Posterior cingulate gyrus (tissue), 11 donors: ENCODE measurements at regions of chr2 and their contacts with region 1.

Region 1: DNA sequence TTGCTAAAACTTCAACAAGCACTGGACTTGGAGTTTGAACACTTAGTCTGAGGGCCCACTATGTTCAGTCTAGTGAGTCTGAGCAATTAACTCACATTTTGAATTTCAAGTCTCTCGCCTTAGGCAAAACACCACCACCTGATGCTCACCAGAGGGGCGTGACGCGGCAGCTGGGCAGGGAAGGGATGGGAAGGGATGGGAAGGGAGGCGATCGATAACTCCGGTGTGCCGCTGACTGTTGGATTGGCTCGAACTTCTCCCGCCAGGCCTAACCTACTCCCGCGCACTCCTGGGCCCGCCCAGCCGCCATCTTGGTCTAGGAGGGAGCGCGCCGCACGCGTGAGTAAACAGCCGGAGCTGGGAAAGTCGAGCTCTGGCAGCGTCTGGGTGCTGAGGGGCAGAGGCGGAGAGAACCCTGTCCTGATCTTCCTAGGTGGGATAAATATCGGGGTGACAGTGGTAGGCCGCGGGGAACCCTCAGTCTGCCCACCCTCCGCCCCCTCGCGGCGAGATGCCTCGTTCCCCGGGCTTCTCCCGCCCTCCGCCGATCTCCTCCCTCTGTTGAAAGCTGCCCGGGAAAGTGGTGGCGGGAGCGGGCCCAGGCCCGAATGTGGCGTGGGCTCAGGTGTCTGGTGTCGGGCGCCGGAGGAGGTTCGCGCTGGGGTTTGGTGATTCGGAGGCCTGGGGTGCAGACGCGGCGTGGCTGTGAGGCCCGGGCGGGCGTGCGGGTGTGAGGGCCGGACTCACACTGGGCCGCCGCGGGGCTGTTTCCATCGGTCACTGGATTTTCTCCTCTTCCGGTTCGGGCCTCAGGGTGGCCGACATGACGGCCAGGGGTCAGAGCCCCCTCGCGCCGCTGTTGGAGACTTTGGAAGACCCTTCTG is at the start of gene RIF1:
- DNase-seq: peak; percentile 81 to 97 (median 87)

Region 2: DNA sequence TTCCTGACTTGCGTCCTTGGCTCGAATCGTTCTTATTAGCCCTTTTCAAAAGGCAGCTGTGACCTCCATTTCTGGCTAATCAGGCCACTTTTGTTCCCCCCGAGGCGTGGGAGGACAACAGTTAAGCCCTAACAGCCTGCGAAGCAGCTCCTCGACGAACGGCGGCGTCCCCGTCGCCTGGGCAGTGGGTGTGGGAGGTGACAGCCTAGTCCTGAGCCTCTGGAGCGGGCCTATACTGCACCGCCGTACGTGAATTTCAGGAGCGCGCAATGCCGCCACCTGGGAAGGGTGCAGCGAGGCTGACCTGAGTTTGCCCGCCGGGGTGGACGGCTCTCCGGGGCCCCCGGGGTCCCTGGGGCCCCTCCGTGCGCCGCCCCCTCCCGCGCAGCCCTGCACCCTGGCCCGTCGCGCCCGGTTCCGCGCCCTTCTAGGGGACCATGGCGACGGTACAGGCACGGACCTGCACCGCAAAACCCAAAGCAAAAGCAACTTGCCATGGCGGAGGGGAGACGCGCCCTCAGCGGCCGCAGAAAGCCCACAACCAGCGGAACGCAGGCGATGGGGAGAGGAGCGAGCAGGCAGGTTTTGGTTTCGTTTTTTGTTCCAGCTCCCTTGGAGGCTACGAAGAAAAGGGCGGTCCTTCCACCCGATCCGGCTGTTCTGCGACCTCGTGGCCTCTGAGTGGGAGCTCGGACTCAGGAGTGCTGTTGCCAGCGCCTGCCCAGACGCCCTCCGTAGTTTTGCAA is 148.4 kb before region 1 on chr2 and contains the start of gene RBM43:
- intact Hi-C with region 1: loop called (anchors 10 kb)
- DNase-seq: peak; percentile 55 to 95 (median 68)